PC-9 (cell line): ENCODE measurements at regions of chr9 and their contacts with region 1.

Region 1: DNA sequence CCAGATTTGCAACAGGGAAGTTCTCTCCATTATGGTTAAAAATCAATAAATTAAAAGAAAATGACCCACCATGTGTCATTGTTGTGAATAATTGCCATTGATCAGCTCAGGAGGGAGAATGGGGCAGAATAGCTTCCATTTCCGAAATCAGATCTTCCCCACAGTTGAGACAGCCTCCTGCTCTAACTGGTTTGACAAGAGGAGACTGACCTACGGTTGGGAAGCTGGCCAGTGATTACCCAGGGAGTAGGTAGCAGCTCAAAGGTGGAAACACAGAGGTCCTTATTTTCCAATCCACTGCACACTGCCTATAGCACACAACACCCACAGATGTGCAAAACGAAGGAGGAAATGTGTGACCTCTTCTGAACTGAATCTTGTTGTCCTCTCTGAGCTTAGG is 69.0 kb upstream of the DAPK1 start:
- DNase-seq: peak; percentile 71 to 93
- H3K4me3 ChIP-seq: peak overlapping the region; percentile 41; the same call in 1 of the 2 replicates
- H3K27ac ChIP-seq: peak overlapping the region; percentile 88
- H3K4me1 ChIP-seq: peaks cover 31% of the 10 kb centered on the region
- H3K27me3 ChIP-seq: no peaks in the 10 kb centered on the region
- CTCF ChIP-seq: no peak

Region 2: DNA sequence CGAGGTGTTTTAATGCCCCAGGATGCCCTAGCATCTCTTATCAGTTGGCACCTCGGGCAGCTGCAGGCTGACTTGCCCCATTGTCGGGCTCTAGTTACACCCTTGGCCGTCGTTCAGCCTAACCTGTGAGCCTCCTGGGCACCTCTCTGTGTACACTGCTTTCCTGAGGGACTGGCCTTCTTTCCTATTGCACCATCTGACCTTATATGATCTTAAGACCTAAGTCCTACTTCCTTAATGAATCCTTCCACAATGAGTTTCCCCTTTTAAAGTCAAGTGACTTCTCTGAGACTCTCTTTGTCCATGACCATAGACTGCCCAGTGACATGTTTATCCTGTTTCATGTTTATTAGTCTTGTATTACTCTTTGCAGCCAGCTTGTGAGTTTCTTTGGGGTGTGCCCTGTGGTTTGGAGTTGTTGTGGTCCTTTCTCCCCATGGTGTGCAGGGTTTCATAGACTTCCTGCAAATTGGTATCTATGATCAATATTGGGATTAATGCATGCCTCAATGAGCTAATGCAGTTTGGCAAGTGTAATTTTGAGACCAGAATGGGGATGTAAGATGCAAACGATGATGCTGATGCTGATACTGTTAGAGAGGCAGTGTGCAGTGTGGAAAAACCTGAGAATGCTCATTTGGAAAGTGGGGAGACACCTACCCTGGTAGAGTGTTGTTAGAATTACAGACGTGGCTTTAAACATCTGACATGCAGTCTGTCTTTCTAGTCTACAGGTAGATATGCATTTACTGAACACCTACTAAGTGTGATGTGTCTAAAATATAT is 74.0 kb after region 1 on chr9:
- CTCF ChIA-PET with region 1: interaction called, 5 read pairs
- POLR2A ChIA-PET with region 1: interaction called, 25 read pairs
- intact Hi-C with region 1: loop called (anchors 1 kb)
- DNase-seq: peak; percentile 82 to 98
- H3K4me3 ChIP-seq: peak overlapping the region; percentile 29; the same call in 1 of the 2 replicates
- H3K27ac ChIP-seq: peak overlapping the region; percentile 83
- H3K4me1 ChIP-seq: peaks cover 81% of the 10 kb centered on the region
- H3K27me3 ChIP-seq: no peaks in the 10 kb centered on the region
- CTCF ChIP-seq: no peak